ENCODE measurements at regions of chr20 and their contacts with region 1.

Region 1: DNA sequence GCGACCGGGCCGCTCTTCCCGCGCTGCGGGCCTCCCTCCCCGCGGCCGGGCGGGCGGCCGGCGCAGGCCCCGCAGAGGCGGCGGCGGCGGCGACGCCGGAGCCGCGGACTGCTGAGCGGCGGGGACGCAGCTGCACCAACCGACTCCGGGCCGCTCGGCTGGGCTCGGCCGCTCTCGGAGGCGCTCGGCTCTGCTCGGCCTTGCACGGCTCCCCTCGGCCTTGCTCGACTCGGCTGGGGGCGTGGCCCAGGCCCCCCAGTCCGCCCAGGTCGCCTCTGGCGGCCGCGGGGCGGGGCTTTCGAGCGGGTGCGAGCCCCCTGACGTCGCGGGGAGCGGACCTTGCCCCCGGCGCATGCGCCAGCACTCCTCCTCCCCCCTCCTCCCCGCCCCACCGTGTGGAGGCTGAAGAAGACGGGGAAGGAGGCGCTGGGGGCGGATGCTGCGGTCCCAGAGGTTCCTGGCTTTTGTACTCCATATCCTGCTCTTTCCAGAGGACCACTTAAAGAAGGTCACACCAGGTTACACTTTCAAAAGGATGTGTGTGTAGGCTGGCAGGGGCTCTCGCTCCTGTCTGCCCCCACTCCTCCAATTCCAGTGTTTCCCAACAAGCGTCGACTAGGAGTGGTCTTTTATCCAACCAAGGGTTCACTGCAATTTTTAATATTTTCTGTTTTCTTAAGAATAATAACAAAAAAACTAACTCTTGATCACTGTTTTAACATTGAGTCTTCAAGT is at the start of gene ZHX3:
- DNase-seq: peak; percentile 95
- H3K4me3 Mint-ChIP-seq: peak within 1 kb of the TSS; percentile 88
- H3K27ac Mint-ChIP-seq: peak within 1 kb of the TSS; percentile 82
- H3K4me1 Mint-ChIP-seq: peaks cover 11% of the 10 kb centered on the region
- H3K27me3 Mint-ChIP-seq: peaks cover 5% of the 10 kb centered on the region
- total RNA-seq, gene ZHX3: 9.5 and 11.9 TPM in 2 replicates

Region 2: GRCh38 chr20:41150664-41151063 is 167.0 kb before region 1 on chr20:
- intact Hi-C with region 1: no loop called
- DNase-seq: no peak
- H3K4me3 Mint-ChIP-seq: peak overlapping the region; percentile 50
- H3K27ac Mint-ChIP-seq: peak overlapping the region; percentile 91
- H3K4me1 Mint-ChIP-seq: peaks cover 94% of the 10 kb centered on the region
- H3K27me3 Mint-ChIP-seq: no peaks in the 10 kb centered on the region

Region 3: DNA sequence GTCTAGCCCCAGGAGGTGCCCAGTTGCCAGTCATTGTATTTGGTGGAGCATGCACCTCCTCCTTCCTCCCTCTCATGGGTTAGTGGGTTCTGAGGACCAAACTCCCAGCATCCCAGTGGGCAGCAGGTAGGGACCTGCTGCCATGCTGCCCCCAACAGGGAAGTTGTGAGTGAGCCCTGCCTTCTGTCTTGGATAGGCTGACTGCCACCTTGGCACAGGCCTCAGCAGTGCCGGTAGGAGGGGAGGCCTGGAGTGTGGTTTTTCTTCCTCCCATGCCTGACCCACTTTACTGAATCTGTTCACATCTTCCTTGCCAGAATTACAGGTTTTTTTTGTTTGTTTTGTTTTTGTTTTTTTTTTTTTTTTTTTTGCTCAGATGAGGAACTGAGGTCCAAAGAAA is 155.8 kb before region 1 on chr20:
- intact Hi-C with region 1: loop called (anchors 1 kb)
- DNase-seq: no peak
- H3K4me3 Mint-ChIP-seq: peak overlapping the region; percentile 24
- H3K27ac Mint-ChIP-seq: peak overlapping the region; percentile 80
- H3K4me1 Mint-ChIP-seq: peaks cover 59% of the 10 kb centered on the region
- H3K27me3 Mint-ChIP-seq: no peaks in the 10 kb centered on the region

Region 4: GRCh38 chr20:41329435-41330342 is 12.0 kb after region 1 on chr20:
- intact Hi-C with region 1: loop called (anchors 1 kb)
- DNase-seq: peak; percentile 53
- H3K4me3 Mint-ChIP-seq: no peak overlapping the region
- H3K27ac Mint-ChIP-seq: peak overlapping the region; percentile 86
- H3K4me1 Mint-ChIP-seq: peaks cover 18% of the 10 kb centered on the region
- H3K27me3 Mint-ChIP-seq: peaks cover 8% of the 10 kb centered on the region

Region 5: DNA sequence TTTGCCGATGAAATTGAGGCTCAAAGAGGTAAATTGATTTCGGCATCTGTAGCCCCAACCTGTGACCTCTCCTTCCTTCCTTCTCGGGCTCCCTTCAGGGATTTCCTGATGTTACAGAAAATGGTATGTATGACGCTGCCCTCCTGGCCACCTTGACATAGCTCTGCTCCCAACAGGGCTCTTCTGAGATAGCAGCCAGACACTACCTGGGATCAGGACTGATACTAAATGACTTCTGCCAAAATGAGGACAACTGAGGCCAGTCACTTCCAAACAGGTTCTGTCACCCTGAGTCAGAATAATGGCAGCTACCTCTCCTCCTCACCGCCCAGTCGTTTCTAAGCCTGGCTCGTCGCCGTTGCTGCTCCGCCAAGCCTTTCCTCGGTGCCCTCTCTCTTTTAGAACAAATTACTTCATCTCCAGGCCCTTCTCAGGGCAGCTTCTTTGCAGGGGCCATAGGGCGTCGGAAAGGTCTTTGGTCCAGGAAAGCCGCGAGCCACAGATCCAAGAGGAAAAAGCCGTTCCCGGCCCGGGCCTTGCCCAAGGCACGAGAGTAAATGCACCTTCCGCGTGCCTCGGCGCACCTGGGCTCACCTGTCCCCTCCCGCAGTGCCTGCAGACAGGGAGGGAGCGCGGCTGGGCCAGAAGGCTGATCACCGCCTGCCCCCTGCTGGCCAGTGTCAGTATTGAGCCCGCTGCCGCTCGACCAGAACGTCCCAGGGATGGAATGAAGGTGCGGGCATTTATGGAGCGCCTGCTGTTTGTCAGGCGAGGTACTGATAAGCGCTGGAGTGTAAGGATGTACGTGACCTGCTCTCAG is 22.0 kb after region 1 on chr20:
- intact Hi-C with region 1: loop called (anchors 1 kb)
- DNase-seq: peak; percentile 78
- H3K4me3 Mint-ChIP-seq: peak overlapping the region; percentile 86
- H3K27ac Mint-ChIP-seq: no peak overlapping the region
- H3K4me1 Mint-ChIP-seq: peaks cover 13% of the 10 kb centered on the region
- H3K27me3 Mint-ChIP-seq: peaks cover 14% of the 10 kb centered on the region

Region 6: GRCh38 chr20:41436679-41437078 is 119.0 kb after region 1 on chr20:
- intact Hi-C with region 1: loop called (anchors 5 kb)
- DNase-seq: no peak
- H3K4me3 Mint-ChIP-seq: peak overlapping the region; percentile 6
- H3K27ac Mint-ChIP-seq: peak overlapping the region; percentile 38
- H3K4me1 Mint-ChIP-seq: peaks cover 75% of the 10 kb centered on the region
- H3K27me3 Mint-ChIP-seq: no peaks in the 10 kb centered on the region

Region 7: GRCh38 chr20:41462372-41463161 is 144.9 kb after region 1 on chr20:
- intact Hi-C with region 1: no loop called
- DNase-seq: no peak
- H3K4me3 Mint-ChIP-seq: no peak overlapping the region
- H3K27ac Mint-ChIP-seq: peak overlapping the region; percentile 0
- H3K4me1 Mint-ChIP-seq: peaks cover 20% of the 10 kb centered on the region
- H3K27me3 Mint-ChIP-seq: no peaks in the 10 kb centered on the region

Region 8: GRCh38 chr20:41617931-41618806 is 300.5 kb after region 1 on chr20 and contains the start of gene CHD6:
- intact Hi-C with region 1: loop called (anchors 1 kb)
- DNase-seq: peak; percentile 99
- H3K4me3 Mint-ChIP-seq: peak within 1 kb of the TSS; percentile 94
- H3K27ac Mint-ChIP-seq: peak within 1 kb of the TSS; percentile 89
- H3K4me1 Mint-ChIP-seq: peaks cover 40% of the 10 kb centered on the region
- H3K27me3 Mint-ChIP-seq: peaks cover 16% of the 10 kb centered on the region
- total RNA-seq, gene CHD6: 34.3 and 36.8 TPM in 2 replicates

Region 9: DNA sequence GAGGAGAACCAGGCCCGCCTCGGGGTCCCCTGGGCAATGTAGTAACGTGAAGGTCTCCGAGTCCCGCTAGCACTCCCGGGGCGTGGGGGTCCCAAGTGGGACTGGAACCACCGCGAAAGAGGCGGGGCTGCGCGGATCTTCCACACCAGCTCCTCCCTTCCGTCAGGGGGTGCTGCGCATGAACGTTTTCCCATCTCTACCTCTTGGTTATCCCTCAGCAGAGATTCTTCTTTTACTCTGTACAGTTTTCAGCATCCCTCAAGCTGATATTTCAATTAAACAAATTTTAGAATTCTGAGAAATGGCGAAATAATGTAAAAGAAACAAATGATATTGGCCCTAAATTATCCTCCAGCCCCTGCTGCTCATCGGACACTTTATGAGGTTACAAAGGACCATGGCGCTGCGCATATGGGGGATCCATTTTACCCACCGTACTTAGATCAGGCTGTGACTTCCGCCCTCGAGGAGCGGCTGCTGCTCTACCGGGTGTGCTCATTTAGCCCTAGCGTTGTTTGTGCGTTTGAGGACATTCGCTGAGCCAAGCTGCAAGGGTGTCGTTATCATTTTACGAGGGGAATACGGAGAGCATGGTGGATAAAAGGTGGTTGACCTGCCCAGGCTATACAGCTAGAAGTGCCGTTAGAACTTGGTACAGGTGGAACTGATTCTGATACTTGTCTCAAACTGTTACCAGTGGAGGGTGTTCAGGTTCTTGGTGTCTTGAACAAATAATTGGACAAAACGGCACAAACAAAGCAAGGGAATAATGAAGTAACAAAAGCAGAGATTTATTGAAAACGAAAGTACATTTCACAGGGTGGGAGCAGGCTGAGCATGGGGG is 375.7 kb after region 1 on chr20:
- intact Hi-C with region 1: loop called (anchors 5 kb)
- DNase-seq: peak; percentile 73
- H3K4me3 Mint-ChIP-seq: peak overlapping the region; percentile 93
- H3K27ac Mint-ChIP-seq: peak overlapping the region; percentile 94
- H3K4me1 Mint-ChIP-seq: peaks cover 13% of the 10 kb centered on the region
- H3K27me3 Mint-ChIP-seq: peaks cover 3% of the 10 kb centered on the region

Measured in activated T-helper 1 cell treated with anti-CD3 and anti-CD28 coated beads, Interleukin-12 subunit alpha, Interleukin-12 subunit beta, Interleukin-2, Interleukin-4 antibody, amounts not matched to agents 30 ng/mL and 10 ng/mL and 1 ng/mL, durations not matched to agents 14 hours and 24 hours and 36 hours (primary cell).